MCF 10A (cell line): ENCODE measurements at regions of chr3 and their contacts with region 1.

Region 1: GRCh38 chr3:132210476-132211346 is 106.5 kb upstream of the ACP3 start:
- DNase-seq: peak; percentile 54
- H3K4me3 Mint-ChIP-seq: no peak overlapping the region
- H3K27ac Mint-ChIP-seq: no peak overlapping the region
- H3K4me1 Mint-ChIP-seq: peaks cover 16% of the 10 kb centered on the region
- H3K27me3 Mint-ChIP-seq: peaks cover 13% of the 10 kb centered on the region
- CTCF ChIP-seq: peak; percentile 72

Region 2: GRCh38 chr3:131957511-131957910 is 253.2 kb before region 1 on chr3:
- CTCF ChIA-PET with region 1: no interaction called
- POLR2A ChIA-PET with region 1: no interaction called
- intact Hi-C with region 1: no loop called
- DNase-seq: no peak
- H3K4me3 Mint-ChIP-seq: no peak overlapping the region
- H3K27ac Mint-ChIP-seq: no peak overlapping the region
- H3K4me1 Mint-ChIP-seq: no peaks in the 10 kb centered on the region
- H3K27me3 Mint-ChIP-seq: no peaks in the 10 kb centered on the region
- CTCF ChIP-seq: no peak

Region 3: GRCh38 chr3:132029182-132029902 is 181.4 kb before region 1 on chr3:
- CTCF ChIA-PET with region 1: interaction called, 14 read pairs
- POLR2A ChIA-PET with region 1: no interaction called
- intact Hi-C with region 1: no loop called
- DNase-seq: peak; percentile 90
- H3K4me3 Mint-ChIP-seq: no peak overlapping the region
- H3K27ac Mint-ChIP-seq: no peak overlapping the region
- H3K4me1 Mint-ChIP-seq: peaks cover 3% of the 10 kb centered on the region
- H3K27me3 Mint-ChIP-seq: peaks cover 39% of the 10 kb centered on the region
- CTCF ChIP-seq: peak; percentile 88

Region 4: DNA sequence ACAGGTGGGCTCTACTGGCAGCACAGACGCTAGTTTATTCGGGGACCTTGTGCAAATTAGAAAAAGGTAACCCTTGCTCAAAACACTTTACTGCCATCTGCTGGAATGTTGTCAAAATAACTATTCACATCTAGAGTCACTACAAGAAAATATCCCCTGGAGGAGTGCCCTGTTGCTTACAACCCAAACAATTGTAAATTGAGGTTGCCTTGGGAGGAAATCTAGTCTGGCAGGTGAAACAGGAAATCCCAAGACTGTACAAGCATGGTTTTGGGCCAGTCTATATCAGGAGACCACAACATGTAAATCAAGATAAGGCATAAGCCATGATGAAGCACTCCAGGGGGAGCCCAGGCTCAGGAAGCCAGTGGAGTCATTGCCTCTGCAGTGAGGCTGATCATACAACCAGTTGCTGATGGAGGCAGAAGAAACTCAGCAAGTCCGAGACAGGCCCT is 30.3 kb before region 1 on chr3:
- CTCF ChIA-PET with region 1: interaction called, 51 read pairs
- POLR2A ChIA-PET with region 1: no interaction called
- intact Hi-C with region 1: no loop called
- DNase-seq: peak; percentile 72
- H3K4me3 Mint-ChIP-seq: no peak overlapping the region
- H3K27ac Mint-ChIP-seq: no peak overlapping the region
- H3K4me1 Mint-ChIP-seq: no peaks in the 10 kb centered on the region
- H3K27me3 Mint-ChIP-seq: no peaks in the 10 kb centered on the region
- CTCF ChIP-seq: peak; percentile 54

Region 5: GRCh38 chr3:132189601-132190000 is 21.1 kb before region 1 on chr3:
- CTCF ChIA-PET with region 1: interaction called, 51 read pairs
- POLR2A ChIA-PET with region 1: interaction called, 15 read pairs
- intact Hi-C with region 1: no loop called
- DNase-seq: no peak
- H3K4me3 Mint-ChIP-seq: no peak overlapping the region
- H3K27ac Mint-ChIP-seq: no peak overlapping the region
- H3K4me1 Mint-ChIP-seq: no peaks in the 10 kb centered on the region
- H3K27me3 Mint-ChIP-seq: peaks cover 14% of the 10 kb centered on the region
- CTCF ChIP-seq: no peak

Region 6: GRCh38 chr3:132196113-132196512 is 14.6 kb before region 1 on chr3:
- CTCF ChIA-PET with region 1: interaction called, 21 read pairs
- POLR2A ChIA-PET with region 1: interaction called, 15 read pairs
- intact Hi-C with region 1: no loop called
- DNase-seq: peak; percentile 47
- H3K4me3 Mint-ChIP-seq: no peak overlapping the region
- H3K27ac Mint-ChIP-seq: peak overlapping the region; percentile 14
- H3K4me1 Mint-ChIP-seq: peaks cover 11% of the 10 kb centered on the region
- H3K27me3 Mint-ChIP-seq: no peaks in the 10 kb centered on the region
- CTCF ChIP-seq: no peak

Region 7: DNA sequence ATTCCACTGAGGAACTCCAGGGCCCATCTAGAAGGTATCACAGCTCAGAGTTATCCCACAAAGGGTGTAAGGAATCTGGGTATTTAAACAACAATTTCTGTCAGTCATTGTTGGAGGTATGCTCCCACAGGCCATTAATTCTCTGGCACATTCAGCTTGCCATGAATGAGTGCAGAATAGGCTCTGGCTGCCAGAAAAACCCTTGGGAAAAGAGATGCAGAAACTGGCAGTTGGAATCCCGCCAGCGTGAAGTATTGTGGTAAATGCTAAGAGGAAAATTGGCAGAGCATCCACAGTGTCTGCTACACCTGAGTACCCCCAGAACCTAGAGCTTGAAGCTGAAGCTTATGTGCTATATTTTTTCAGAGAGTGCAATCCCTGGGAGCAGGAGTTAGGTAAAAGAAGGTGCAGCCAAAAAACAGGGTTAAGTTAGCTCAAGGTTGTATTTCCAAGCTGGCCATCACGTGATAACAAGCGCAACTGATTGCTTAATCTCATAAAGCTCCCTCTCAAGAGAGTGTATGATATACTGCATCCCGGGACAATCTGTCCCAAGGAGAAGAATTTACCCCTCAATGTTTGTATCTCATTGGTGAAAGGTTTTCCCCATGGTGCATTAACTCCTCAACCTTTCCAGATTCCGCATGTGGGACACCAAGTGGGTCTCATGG is 12.3 kb after region 1 on chr3:
- CTCF ChIA-PET with region 1: interaction called, 22 read pairs
- POLR2A ChIA-PET with region 1: interaction called, 24 read pairs
- intact Hi-C with region 1: no loop called
- DNase-seq: peak; percentile 48
- H3K4me3 Mint-ChIP-seq: no peak overlapping the region
- H3K27ac Mint-ChIP-seq: no peak overlapping the region
- H3K4me1 Mint-ChIP-seq: peaks cover 4% of the 10 kb centered on the region
- H3K27me3 Mint-ChIP-seq: no peaks in the 10 kb centered on the region
- CTCF ChIP-seq: no peak

Region 8: DNA sequence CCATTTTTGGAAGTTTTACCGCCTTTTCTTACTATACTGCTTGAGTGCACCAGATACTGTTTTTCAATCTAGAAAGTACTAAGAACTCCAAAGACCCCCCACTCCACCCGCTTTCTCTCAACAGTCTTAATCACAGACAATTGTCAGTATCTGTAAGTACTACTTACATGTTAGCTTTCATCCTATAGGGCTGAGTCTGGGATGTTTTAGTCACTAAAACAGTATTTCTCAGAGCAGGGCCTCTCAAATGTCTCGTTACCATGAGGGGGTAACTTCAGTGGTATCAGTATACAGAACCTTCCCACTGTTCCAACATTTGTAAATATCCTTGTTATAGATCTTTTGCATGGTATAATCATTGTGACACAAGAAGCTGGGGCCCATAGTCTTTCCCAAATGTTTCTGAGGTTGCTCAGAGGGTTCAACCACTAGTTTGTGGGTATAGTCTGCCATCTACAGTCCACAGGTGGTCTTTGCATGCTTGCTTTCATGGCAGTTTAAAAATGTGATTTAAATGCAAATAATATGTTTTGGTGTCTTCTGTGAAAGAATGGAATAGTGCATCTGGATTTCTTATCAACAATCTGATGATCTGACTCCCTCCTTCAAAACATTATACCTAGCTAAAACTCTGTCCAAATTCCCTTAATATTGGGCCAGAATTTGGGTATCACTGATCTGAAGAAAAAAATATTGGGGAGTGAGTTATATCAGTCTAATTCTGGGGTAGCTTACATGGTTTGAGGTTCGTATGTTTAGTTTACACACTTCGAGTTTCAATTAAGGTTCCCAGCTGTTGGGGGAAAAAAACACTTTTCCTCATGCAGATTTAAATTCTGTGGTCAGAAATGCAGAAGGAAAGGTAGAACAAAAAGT is 188.6 kb after region 1 on chr3:
- CTCF ChIA-PET with region 1: interaction called, 11 read pairs
- POLR2A ChIA-PET with region 1: no interaction called
- intact Hi-C with region 1: no loop called
- DNase-seq: peak; percentile 66
- H3K4me3 Mint-ChIP-seq: no peak overlapping the region
- H3K27ac Mint-ChIP-seq: no peak overlapping the region
- H3K4me1 Mint-ChIP-seq: no peaks in the 10 kb centered on the region
- H3K27me3 Mint-ChIP-seq: no peaks in the 10 kb centered on the region
- CTCF ChIP-seq: peak; percentile 88

Region 9: DNA sequence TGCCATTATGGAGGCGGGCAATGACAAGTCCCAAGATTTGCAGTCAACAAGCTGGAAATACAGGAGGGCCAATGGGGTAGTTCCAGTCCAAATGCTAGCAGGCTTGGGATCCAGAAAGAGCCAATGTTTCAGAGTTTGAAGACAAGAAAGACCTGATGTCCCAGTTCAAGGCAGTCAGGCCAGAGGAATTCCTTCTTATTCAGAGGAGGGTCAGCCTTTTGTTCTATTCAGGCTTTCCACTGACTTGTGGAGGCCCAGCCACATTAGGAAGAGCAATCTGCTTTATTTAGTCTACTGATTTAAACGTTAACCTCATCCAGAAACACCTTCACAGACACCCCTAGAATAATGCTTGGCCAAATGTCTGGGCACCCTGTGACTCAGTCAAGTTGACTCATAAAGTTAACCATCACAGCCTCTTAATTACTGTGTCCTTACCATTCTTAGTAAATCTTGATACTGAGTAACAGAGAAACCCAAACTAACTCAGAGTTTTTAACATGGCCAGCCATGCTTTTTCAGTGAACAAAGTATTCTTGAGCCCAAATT is 562.4 kb after region 1 on chr3:
- CTCF ChIA-PET with region 1: no interaction called
- POLR2A ChIA-PET with region 1: no interaction called
- intact Hi-C with region 1: no loop called
- DNase-seq: no peak
- H3K4me3 Mint-ChIP-seq: no peak overlapping the region
- H3K27ac Mint-ChIP-seq: no peak overlapping the region
- H3K4me1 Mint-ChIP-seq: no peaks in the 10 kb centered on the region
- H3K27me3 Mint-ChIP-seq: peaks cover 11% of the 10 kb centered on the region
- CTCF ChIP-seq: no peak

Region 10: GRCh38 chr3:133096900-133097613 is 886.3 kb after region 1 on chr3:
- CTCF ChIA-PET with region 1: no interaction called
- POLR2A ChIA-PET with region 1: no interaction called
- intact Hi-C with region 1: no loop called
- DNase-seq: no peak
- H3K4me3 Mint-ChIP-seq: no peak overlapping the region
- H3K27ac Mint-ChIP-seq: no peak overlapping the region
- H3K4me1 Mint-ChIP-seq: no peaks in the 10 kb centered on the region
- H3K27me3 Mint-ChIP-seq: no peaks in the 10 kb centered on the region
- CTCF ChIP-seq: no peak